Activated naive CD4-positive, alpha-beta T cell treated with anti-CD3 and anti-CD28 coated beads for 36 hours (primary cell): ENCODE measurements at regions of chr12 and their contacts with region 1.

Region 1: GRCh38 chr12:10501031-10501430 is 4.7 kb upstream of the EIF2S3B start:
- DNase-seq: no peak
- H3K4me3 Mint-ChIP-seq: no peak overlapping the region
- H3K27ac Mint-ChIP-seq: no peak overlapping the region
- H3K4me1 Mint-ChIP-seq: peaks cover 16% of the 10 kb centered on the region
- H3K27me3 Mint-ChIP-seq: peaks cover 19% of the 10 kb centered on the region

Region 2: DNA sequence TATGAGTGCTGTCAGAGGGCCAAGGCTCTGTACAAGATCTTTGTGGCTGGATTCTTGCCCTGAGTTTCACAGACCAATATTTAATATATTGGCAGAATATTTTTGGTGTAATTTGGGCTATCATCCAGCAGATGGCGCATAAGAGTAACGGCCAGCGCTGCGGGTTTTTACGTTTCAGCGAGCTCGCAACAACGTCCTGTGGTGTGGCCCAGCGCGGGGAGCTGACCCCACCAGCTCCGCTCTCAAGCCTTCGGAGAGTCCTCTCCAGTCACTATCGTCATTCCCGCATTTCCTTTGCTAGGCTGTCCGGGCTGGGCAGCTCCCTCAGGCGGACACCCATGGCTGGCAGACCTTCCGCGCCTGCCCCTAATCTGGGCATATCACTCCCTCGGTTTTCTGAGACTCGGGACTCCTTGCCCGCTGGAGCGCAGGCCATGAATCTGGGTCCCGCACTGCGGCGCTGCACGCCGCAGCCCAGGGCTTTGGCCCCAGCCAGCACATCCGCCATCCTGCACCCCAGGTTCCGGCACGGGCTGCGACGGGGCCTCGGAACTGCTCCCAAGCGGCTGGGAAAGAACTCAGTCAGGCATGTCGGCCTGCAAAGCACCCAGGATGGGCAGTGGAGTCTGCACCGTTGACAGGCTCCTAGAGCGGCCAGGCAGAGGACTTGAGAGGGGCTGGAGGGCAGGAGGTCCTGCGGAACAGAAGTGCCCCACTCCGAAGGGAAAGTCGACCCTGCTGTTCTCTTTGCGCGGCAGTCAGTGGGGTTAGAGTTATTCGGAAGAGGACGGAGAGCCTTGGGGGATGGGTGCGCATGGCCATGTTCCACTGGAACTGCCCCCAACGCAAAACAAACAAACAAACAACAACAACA is 347.5 kb before region 1 on chr12:
- CTCF ChIA-PET with region 1: no interaction called
- intact Hi-C with region 1: loop called (anchors 5 kb)
- DNase-seq: peak; percentile 66
- H3K4me3 Mint-ChIP-seq: peak overlapping the region; percentile 76
- H3K27ac Mint-ChIP-seq: peak overlapping the region; percentile 63
- H3K4me1 Mint-ChIP-seq: peaks cover 10% of the 10 kb centered on the region
- H3K27me3 Mint-ChIP-seq: peaks cover 18% of the 10 kb centered on the region

Region 3: DNA sequence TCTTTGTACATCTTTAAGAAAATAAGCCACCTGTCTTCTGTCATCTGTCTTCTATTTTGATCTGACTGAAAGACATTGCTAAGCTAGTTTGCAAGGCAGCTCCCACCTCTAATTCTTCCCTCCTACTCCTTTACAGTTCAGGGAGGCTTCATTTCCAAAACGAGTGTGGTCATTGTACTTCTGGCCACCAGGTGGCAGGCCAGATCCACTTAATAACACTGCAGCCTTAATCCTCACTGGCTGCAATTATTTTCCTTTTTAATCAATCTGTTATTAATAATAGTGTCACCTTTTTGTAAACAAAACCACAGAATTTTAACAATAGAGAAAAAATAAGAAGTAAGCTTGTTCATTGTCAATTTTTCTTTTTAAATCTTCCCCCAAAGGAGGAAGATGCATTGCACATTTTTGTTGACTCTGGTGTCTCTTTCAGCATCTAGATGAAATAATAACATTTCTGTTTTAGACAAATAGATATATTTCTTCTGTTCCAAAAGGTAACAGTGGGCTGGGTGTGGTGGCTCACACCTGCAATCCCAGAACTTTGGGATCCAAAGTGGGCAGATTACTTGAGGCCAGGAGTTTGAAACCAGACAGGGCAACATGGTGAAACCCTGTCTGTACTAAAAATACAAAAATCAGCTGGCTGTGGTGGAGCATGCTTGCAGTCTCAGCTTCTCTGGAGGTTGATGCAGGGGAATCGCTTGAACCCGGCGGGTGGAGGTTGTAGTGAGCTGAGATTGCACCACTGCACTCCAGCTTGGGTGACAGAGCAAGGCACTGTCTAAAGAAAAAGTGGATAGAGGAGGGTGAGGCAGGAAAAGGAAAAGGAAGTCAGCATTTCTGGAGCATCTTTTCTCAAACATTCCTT is 265.0 kb before region 1 on chr12:
- CTCF ChIA-PET with region 1: interaction called, 4 read pairs
- intact Hi-C with region 1: loop called (anchors 1 kb)
- DNase-seq: peak; percentile 43
- H3K4me3 Mint-ChIP-seq: no peak overlapping the region
- H3K27ac Mint-ChIP-seq: no peak overlapping the region
- H3K4me1 Mint-ChIP-seq: no peaks in the 10 kb centered on the region
- H3K27me3 Mint-ChIP-seq: no peaks in the 10 kb centered on the region

Region 4: DNA sequence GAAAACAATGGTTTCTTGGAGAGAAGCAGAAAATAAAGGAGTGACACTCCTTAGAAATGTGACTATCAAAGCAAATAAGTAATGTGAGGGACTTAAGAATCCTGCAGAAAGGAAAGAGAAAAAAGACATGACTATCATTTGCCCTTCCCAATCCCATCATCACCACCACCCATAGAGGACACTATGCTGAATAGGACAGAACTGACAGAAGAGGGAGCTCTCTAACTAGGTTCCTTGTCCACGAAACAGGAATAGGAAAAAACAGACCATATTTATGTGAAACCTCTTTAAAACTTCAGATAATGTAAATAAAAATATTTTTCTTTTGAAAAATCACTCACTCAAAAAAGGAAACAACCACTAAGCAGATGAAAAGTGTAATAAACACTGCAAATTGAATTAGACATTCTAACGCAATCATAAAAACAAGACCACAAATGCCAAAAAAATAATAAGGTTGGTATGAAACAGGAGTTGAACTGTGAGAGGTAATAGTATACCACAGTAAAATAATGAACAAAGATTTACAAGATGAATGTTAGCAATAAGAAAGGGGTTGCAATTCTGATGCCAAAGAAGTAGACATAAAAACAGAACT is 169.3 kb before region 1 on chr12:
- CTCF ChIA-PET with region 1: no interaction called
- intact Hi-C with region 1: loop called (anchors 5 kb)
- DNase-seq: no peak
- H3K4me3 Mint-ChIP-seq: no peak overlapping the region
- H3K27ac Mint-ChIP-seq: no peak overlapping the region
- H3K4me1 Mint-ChIP-seq: no peaks in the 10 kb centered on the region
- H3K27me3 Mint-ChIP-seq: peaks cover 4% of the 10 kb centered on the region

Region 5: GRCh38 chr12:10562306-10562933 is 61.4 kb after region 1 on chr12:
- CTCF ChIA-PET with region 1: no interaction called
- intact Hi-C with region 1: loop called (anchors 5 kb)
- DNase-seq: peak; percentile 36
- H3K4me3 Mint-ChIP-seq: no peak overlapping the region
- H3K27ac Mint-ChIP-seq: no peak overlapping the region
- H3K4me1 Mint-ChIP-seq: peaks cover 5% of the 10 kb centered on the region
- H3K27me3 Mint-ChIP-seq: peaks cover 15% of the 10 kb centered on the region